Ascending aorta (tissue), 2 donors: ENCODE measurements at regions of chr13 and their contacts with region 1.

Region 1: GRCh38 chr13:99269627-99270241 is 11.6 kb upstream of the GPR18 start:
- DNase-seq: no peak
- H3K4me3 ChIP-seq: no peak overlapping the region
- H3K27ac ChIP-seq: no peak overlapping the region
- H3K4me1 ChIP-seq: no peaks in the 10 kb centered on the region
- H3K27me3 ChIP-seq: no peaks in the 10 kb centered on the region
- CTCF ChIP-seq: peak; percentile 42 to 68 (median 61)

Region 2: GRCh38 chr13:98890186-98890585 is 379.5 kb before region 1 on chr13:
- intact Hi-C with region 1: no loop called
- DNase-seq: no peak
- H3K4me3 ChIP-seq: no peak overlapping the region
- H3K27ac ChIP-seq: no peak overlapping the region
- H3K4me1 ChIP-seq: no peaks in the 10 kb centered on the region
- H3K27me3 ChIP-seq: no peaks in the 10 kb centered on the region
- CTCF ChIP-seq: no peak

Region 3: GRCh38 chr13:99176309-99177276 is 93.1 kb before region 1 on chr13:
- intact Hi-C with region 1: loop called (anchors 1 kb)
- DNase-seq: peak in 1 of 2 donors; percentile 81
- H3K4me3 ChIP-seq: no peak overlapping the region
- H3K27ac ChIP-seq: no peak overlapping the region
- H3K4me1 ChIP-seq: no peaks in the 10 kb centered on the region
- H3K27me3 ChIP-seq: no peaks in the 10 kb centered on the region
- CTCF ChIP-seq: peak; percentile 83 to 93 (median 86)

Region 4: GRCh38 chr13:99436686-99437416 is 167.1 kb after region 1 on chr13:
- intact Hi-C with region 1: loop called (anchors 2 kb)
- DNase-seq: peak; percentile 33 to 93
- H3K4me3 ChIP-seq: no peak overlapping the region
- H3K27ac ChIP-seq: no peak overlapping the region
- H3K4me1 ChIP-seq: no peaks in the 10 kb centered on the region
- H3K27me3 ChIP-seq: no peaks in the 10 kb centered on the region
- CTCF ChIP-seq: peak; percentile 99 to 100 (median 99)